Heart right ventricle (tissue), 16 donors: ENCODE measurements at regions of chr1 and their contacts with region 1.

Region 1: GRCh38 chr1:236058141-236058934 is 6.6 kb downstream of the NID1 start:
- DNase-seq: no peak
- ATAC-seq: peak in 4 of 8 donors; percentile 20 to 32 (median 26)
- H3K4me3 ChIP-seq: peak overlapping the region in 5 of 10 donors; percentile 4 to 26 (median 13)
- H3K27ac ChIP-seq: peak overlapping the region in 5 of 10 donors; percentile 8 to 66 (median 46)
- H3K4me1 ChIP-seq: peaks cover 2 to 72% (median 60%) of the 10 kb centered on the region in 9 donors
- H3K27me3 ChIP-seq: peaks cover 0 to 9% (median 0%) of the 10 kb centered on the region in 7 donors
- CTCF ChIP-seq: no peak

Region 2: DNA sequence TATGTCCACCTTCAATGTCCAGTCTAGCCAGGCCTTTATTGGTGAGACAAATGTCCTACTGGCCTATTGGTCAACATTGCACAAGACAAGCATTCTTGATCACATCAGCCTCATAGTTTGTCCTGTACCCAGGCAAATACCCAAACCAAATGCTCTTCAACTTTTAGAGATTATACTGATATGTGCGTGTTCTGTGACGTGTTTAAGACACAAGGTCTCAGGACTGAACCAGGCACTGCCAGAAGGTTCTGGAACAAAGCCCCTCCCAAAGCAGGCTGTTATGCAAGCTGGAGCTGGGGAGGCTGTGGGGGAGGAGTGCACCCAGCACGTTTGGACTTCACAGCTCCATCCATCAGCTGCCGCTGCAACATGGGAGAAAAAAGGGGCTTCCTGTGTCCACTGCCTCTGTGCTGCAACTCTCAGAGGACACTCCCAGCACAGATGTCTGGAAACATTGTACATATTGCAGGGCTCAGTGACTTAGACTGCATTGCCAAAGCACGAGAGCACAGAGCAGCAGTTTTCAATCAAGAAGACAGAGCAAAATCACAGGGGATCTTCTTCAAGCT is 39.4 kb before region 1 on chr1:
- intact Hi-C with region 1: loop called in 3 of 10 experiments (anchors 5 kb)
- DNase-seq: peak; percentile 77 to 86
- ATAC-seq: peak; percentile 82 to 90 (median 86)
- H3K4me3 ChIP-seq: no peak overlapping the region
- H3K27ac ChIP-seq: peak overlapping the region; percentile 63 to 87 (median 80)
- H3K4me1 ChIP-seq: peaks cover 4 to 69% (median 38%) of the 10 kb centered on the region in 9 donors
- H3K27me3 ChIP-seq: no peaks in the 10 kb centered on the region
- CTCF ChIP-seq: no peak